PC-9 (cell line): ENCODE measurements at regions of chr7 and their contacts with region 1.

Region 1: GRCh38 chr7:142405122-142405765 is 147.4 kb upstream of the PRSS58 start:
- DNase-seq: no peak
- H3K4me3 ChIP-seq: no peak overlapping the region
- H3K27ac ChIP-seq: no peak overlapping the region
- H3K4me1 ChIP-seq: no peaks in the 10 kb centered on the region
- H3K27me3 ChIP-seq: no peaks in the 10 kb centered on the region
- CTCF ChIP-seq: no peak

Region 2: GRCh38 chr7:142231716-142232115 is 173.5 kb before region 1 on chr7:
- CTCF ChIA-PET with region 1: no interaction called
- POLR2A ChIA-PET with region 1: no interaction called
- intact Hi-C with region 1: no loop called
- DNase-seq: no peak
- H3K4me3 ChIP-seq: no peak overlapping the region
- H3K27ac ChIP-seq: no peak overlapping the region
- H3K4me1 ChIP-seq: no peaks in the 10 kb centered on the region
- H3K27me3 ChIP-seq: peaks cover 6% of the 10 kb centered on the region; the same call in 1 of the 2 replicates
- CTCF ChIP-seq: no peak

Region 3: DNA sequence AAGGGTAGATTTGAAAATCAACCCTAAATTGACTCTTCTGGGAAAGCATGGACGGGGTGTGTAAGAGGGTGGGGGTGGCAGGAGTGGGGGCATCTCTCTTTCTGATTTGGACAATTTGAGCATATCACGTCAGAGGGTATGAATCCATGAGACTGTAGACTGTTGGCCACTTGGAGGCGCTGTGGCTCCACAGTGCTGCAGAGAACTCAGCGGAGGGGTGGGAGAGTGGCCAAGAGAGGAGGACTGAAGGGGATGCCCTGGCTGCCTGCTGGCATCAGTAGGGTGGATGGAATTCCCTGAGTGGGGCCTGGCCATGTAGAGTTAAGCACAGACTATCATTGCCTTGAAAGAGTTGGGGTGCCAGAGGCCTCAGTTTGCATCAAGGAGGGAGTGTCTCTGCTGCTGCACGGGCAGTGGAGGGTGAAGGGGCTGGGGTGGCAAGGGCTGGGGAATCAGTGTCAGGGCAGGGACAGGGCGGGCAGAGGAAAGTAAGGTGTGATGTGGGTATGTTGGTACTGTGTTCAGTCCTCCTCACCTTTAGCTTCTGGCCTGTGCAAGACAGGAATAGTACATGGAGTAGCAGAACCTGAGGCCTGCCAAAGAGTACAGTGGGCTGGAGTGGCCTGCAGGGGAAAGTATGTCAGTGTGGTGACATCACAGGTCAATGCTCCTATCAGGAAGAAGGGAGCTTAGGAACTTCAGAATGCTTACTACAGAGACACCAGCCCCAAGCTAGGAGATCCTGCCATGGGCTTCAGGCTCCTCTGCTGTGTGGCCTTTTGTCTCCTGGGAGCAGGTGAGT is 13.9 kb before region 1 on chr7:
- CTCF ChIA-PET with region 1: interaction called, 4 read pairs
- POLR2A ChIA-PET with region 1: interaction called, 16 read pairs
- intact Hi-C with region 1: no loop called
- DNase-seq: peak in 1 of 2 experiments; percentile 52
- H3K4me3 ChIP-seq: no peak overlapping the region
- H3K27ac ChIP-seq: no peak overlapping the region
- H3K4me1 ChIP-seq: 0 out of 2 replicates have a peak, but pooled peaks cover 4% of the 10 kb centered on the region
- H3K27me3 ChIP-seq: no peaks in the 10 kb centered on the region
- CTCF ChIP-seq: peak; percentile 58

Region 4: DNA sequence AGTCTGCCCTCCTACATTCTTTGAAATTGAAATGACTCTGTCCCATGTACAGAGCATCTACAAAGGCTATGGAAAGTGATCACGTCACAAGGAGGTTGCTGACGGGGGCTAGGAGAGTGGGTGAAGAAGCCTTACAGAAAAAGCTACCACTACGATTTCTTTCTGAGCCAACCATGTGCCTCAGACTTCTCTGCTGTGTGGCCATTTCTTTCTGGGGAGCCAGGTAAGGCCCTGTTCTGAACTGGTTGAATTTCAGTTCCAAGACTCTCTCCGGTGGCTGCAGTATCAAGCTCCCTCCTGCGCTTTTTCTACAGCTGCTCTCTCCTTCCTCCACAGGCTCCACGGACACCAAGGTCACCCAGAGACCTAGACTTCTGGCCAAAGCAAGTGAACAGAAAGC is 231.5 kb after region 1 on chr7:
- CTCF ChIA-PET with region 1: no interaction called
- POLR2A ChIA-PET with region 1: no interaction called
- intact Hi-C with region 1: no loop called
- DNase-seq: no peak
- H3K4me3 ChIP-seq: no peak overlapping the region
- H3K27ac ChIP-seq: no peak overlapping the region
- H3K4me1 ChIP-seq: no peaks in the 10 kb centered on the region
- H3K27me3 ChIP-seq: no peaks in the 10 kb centered on the region
- CTCF ChIP-seq: no peak